Activated CD4-positive, alpha-beta memory T cell treated with anti-CD3 and anti-CD28 coated beads for 36 hours (primary cell): ENCODE measurements at regions of chr20 and their contacts with region 1.

Region 1: GRCh38 chr20:59032023-59032712 is at the start of gene ATP5F1E:
- DNase-seq: peak; percentile 97
- H3K4me3 Mint-ChIP-seq: peak within 1 kb of the TSS; percentile 94
- H3K27ac Mint-ChIP-seq: peak within 1 kb of the TSS; percentile 94
- H3K4me1 Mint-ChIP-seq: peaks cover 73% of the 10 kb centered on the region
- H3K27me3 Mint-ChIP-seq: no peaks in the 10 kb centered on the region
- total RNA-seq, gene ATP5F1E: 82.2 to 90.4 TPM

Region 2: DNA sequence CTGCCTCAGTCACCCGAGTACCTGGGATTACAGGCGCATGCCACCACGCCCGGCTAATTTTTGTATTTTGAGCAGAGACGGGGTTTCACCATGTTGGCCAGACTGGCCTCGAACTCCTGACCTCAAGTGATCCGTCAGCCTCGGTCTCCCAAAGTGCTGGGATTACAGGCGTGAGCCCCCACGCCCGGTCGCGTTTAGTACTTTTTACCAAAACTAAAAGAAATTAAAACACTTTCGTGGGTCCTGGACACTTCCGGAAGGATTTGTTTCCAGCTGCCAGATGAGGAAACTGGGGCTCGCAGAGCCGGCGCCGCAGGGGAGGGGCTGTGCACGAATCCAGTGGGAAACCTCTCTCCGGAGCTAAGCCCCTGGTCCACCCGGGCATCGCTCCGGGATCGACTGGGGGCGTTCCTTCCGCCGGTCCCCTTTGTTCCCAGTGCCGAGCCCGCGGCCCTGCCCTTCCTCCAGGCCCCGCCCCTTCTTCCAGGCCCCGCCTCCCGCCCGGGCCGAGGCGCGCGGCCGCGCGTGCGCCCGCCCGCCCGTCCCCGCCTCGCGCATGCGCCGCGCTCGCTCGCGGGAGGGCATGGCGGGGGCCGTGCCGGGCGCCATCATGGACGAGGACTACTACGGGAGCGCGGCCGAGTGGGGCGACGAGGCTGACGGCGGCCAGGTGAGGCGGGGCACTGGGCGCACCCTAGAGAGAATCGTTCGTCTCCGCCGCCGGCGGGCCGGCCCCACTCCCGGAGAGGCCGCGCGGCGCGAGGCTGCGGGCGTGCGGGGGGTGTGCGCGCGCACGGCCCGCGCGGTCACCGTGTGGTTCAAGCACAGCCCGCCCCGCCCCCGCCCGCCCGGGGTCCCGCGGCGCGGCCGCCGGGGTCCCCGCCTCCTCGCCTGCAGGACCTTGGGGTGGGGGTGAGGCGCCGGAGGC is 51.2 kb before region 1 on chr20 and contains the start of gene NELFCD:
- CTCF ChIA-PET with region 1: interaction called, 4 read pairs
- POLR2A ChIA-PET with region 1: interaction called, 5 read pairs
- intact Hi-C with region 1: loop called (anchors 2 kb)
- DNase-seq: peak; percentile 92
- H3K4me3 Mint-ChIP-seq: peak within 1 kb of the TSS; percentile 91
- H3K27ac Mint-ChIP-seq: peak within 1 kb of the TSS; percentile 88
- H3K4me1 Mint-ChIP-seq: peaks cover 34% of the 10 kb centered on the region
- H3K27me3 Mint-ChIP-seq: no peaks in the 10 kb centered on the region
- total RNA-seq, gene NELFCD: 80.5 to 92.3 TPM

Region 3: DNA sequence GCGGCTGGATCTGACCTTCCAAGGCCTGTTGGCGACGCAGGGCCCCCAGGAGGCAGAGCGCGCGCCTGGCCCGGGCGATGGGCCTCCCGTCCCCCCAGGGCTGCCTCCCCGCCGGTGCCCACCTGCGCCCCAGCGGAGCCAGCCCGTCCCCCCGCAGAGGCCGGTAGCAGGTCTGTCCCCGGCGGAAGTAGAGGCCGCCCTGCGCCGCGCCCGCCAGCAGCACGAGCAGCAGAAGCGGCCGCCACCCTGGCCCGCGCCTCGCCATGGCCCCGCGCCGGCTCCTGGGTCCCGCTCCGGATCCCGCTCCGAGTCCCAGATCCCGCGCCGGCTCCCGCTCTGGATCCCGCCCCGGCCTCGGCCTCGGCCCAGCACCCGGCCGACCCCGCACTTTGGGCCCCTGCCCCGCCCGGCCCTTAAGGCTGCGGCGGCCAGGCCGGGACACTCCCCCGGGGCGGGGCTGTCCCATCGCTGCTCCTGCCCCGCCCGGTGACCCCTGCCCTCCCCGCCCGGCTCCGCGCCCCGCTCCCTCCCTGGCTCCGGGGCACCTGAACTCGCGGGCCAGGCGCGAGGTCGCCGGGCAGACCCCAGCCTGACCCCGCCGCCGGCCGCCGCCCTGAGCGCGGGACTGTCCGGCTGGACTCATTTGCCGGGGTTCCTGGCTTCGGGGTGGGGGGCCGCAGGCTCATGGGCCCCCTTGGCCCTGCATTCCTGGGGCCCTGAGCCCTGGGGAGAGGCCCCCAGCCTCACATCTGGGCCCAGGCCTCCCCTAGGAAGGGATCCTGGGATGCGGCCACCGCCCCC is 25.1 kb before region 1 on chr20 and contains the start of gene CTSZ:
- CTCF ChIA-PET with region 1: no interaction called
- POLR2A ChIA-PET with region 1: interaction called, 4 read pairs
- intact Hi-C with region 1: loop called (anchors 1 kb)
- DNase-seq: peak; percentile 56
- H3K4me3 Mint-ChIP-seq: peak within 1 kb of the TSS; percentile 74
- H3K27ac Mint-ChIP-seq: peak within 1 kb of the TSS; percentile 28
- H3K4me1 Mint-ChIP-seq: peaks cover 32% of the 10 kb centered on the region
- H3K27me3 Mint-ChIP-seq: no peaks in the 10 kb centered on the region
- total RNA-seq, gene CTSZ: 32.9 to 34.8 TPM

Region 4: GRCh38 chr20:59042796-59043660 is 10.9 kb after region 1 on chr20:
- CTCF ChIA-PET with region 1: interaction called, 6 read pairs
- POLR2A ChIA-PET with region 1: interaction called, 36 read pairs
- intact Hi-C with region 1: loop called (anchors 1 kb)
- DNase-seq: peak; percentile 96
- H3K4me3 Mint-ChIP-seq: peak overlapping the region; percentile 92
- H3K27ac Mint-ChIP-seq: peak overlapping the region; percentile 88
- H3K4me1 Mint-ChIP-seq: peaks cover 55% of the 10 kb centered on the region
- H3K27me3 Mint-ChIP-seq: no peaks in the 10 kb centered on the region

Region 5: DNA sequence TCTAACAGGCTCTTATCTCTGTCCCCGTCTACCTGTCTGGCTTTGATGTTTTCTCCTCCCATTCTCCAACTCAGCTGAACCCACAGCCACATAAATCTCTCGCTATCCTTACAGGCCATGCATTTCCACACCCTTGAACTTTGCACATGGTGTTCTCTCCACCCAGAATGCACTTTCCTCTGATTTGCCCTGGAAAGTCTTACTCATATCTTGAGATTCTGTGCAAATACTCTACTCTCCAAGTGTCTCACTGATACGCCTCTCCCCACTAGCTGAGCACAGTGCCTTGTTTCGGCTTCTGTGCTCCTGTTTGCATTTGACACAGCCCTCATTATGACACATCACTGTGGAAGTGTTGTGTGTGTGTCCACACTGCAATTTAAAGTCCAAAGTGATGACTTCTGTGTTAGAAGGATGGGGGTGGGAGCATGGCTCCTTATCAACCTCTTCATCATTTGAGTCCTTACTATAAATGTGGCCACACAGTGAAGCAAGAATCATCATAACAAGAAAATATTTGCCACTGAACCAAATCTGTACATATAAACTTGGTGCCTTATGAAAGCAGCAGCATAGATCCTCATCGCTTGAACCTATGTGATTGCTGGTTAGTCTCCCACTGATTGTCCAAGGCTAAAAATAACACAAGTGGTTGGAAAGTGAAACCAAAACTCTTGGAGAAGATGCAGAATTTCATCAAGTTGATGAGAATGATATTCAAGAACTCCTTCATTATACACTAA is 15.9 kb after region 1 on chr20:
- CTCF ChIA-PET with region 1: interaction called, 6 read pairs
- POLR2A ChIA-PET with region 1: interaction called, 36 read pairs
- intact Hi-C with region 1: loop called (anchors 2 kb)
- DNase-seq: peak; percentile 68
- H3K4me3 Mint-ChIP-seq: no peak overlapping the region
- H3K27ac Mint-ChIP-seq: peak overlapping the region; percentile 47
- H3K4me1 Mint-ChIP-seq: peaks cover 31% of the 10 kb centered on the region
- H3K27me3 Mint-ChIP-seq: no peaks in the 10 kb centered on the region

Region 6: GRCh38 chr20:59214606-59215547 is 182.7 kb after region 1 on chr20:
- CTCF ChIA-PET with region 1: no interaction called
- POLR2A ChIA-PET with region 1: no interaction called
- intact Hi-C with region 1: no loop called
- DNase-seq: no peak
- H3K4me3 Mint-ChIP-seq: no peak overlapping the region
- H3K27ac Mint-ChIP-seq: no peak overlapping the region
- H3K4me1 Mint-ChIP-seq: peaks cover 6% of the 10 kb centered on the region
- H3K27me3 Mint-ChIP-seq: no peaks in the 10 kb centered on the region

Region 7: DNA sequence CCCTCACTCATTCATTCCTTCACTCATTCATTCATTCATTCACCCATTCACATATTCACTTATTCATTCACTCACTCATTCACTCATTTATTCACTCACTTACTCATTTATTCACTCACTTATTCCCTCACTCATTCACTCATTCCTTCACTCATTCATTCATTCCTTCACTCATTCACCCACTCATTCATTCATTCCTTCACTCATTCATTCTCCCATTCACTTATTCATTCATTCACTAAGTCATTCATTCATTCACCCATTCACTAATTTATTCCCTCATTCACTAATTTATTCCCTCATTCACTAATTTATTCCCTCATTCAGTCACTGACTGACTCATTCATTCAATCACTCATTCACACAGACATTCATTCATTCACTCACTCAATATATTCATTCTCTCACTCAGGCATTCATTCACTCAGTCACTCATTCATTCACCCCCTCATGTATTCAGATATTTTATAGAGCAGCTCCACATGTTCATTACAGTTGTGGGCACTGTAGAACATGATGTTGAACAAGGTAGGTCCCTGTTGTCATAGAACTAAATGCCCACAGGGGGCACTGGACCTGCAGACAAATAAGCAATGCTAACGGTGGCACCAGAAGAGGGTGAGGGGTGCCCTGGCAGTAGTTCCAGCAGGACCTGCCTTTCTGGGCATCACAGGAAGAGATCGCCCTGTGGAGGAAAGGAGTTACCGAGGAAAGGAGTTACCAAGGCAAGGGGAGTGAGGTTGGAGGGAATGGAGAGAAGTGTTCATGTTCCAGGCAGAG is 396.1 kb after region 1 on chr20:
- CTCF ChIA-PET with region 1: no interaction called
- POLR2A ChIA-PET with region 1: no interaction called
- intact Hi-C with region 1: no loop called
- DNase-seq: no peak
- H3K4me3 Mint-ChIP-seq: no peak overlapping the region
- H3K27ac Mint-ChIP-seq: no peak overlapping the region
- H3K4me1 Mint-ChIP-seq: peaks cover 10% of the 10 kb centered on the region
- H3K27me3 Mint-ChIP-seq: no peaks in the 10 kb centered on the region